ENCODE measurements at regions of chr6 and their contacts with region 1.

Region 1: GRCh38 chr6:47455534-47456209 is 21.9 kb upstream of the CD2AP start:
- DNase-seq: no peak
- H3K4me3 ChIP-seq: no peak overlapping the region
- H3K4me3 Mint-ChIP-seq: no peak overlapping the region
- H3K27ac Mint-ChIP-seq: no peak overlapping the region
- H3K4me1 ChIP-seq: peaks cover 19% of the 10 kb centered on the region
- H3K4me1 Mint-ChIP-seq: peaks cover 13% of the 10 kb centered on the region
- H3K27me3 ChIP-seq: no peaks in the 10 kb centered on the region
- H3K27me3 Mint-ChIP-seq: no peaks in the 10 kb centered on the region
- CTCF ChIP-seq: no peak

Region 2: DNA sequence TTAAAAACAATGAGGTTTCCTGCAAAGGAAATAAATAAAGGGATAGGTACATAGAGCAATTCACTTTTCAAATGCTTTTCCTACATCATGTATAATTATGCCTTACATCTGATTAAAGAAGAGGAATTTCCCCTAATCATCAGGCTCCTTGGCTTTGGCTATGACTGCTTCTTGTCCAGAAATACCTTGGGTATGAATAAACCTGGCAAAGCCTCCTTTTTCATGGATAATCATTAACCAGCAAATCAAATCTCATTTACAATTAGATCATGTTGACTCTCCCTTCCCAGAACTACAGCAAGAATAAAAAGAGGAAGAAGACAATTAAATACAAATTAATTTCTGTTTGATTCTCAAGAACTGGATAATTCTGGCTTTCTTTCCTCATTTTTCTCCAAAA is 36.1 kb before region 1 on chr6:
- CTCF ChIA-PET with region 1: no interaction called
- POLR2A ChIA-PET with region 1: no interaction called
- intact Hi-C with region 1: loop called (anchors 1 kb)
- DNase-seq: no peak
- H3K4me3 ChIP-seq: no peak overlapping the region
- H3K4me3 Mint-ChIP-seq: no peak overlapping the region
- H3K27ac Mint-ChIP-seq: no peak overlapping the region
- H3K4me1 ChIP-seq: peaks cover 44% of the 10 kb centered on the region
- H3K4me1 Mint-ChIP-seq: peaks cover 28% of the 10 kb centered on the region
- H3K27me3 ChIP-seq: no peaks in the 10 kb centered on the region
- H3K27me3 Mint-ChIP-seq: no peaks in the 10 kb centered on the region
- CTCF ChIP-seq: no peak

Region 3: DNA sequence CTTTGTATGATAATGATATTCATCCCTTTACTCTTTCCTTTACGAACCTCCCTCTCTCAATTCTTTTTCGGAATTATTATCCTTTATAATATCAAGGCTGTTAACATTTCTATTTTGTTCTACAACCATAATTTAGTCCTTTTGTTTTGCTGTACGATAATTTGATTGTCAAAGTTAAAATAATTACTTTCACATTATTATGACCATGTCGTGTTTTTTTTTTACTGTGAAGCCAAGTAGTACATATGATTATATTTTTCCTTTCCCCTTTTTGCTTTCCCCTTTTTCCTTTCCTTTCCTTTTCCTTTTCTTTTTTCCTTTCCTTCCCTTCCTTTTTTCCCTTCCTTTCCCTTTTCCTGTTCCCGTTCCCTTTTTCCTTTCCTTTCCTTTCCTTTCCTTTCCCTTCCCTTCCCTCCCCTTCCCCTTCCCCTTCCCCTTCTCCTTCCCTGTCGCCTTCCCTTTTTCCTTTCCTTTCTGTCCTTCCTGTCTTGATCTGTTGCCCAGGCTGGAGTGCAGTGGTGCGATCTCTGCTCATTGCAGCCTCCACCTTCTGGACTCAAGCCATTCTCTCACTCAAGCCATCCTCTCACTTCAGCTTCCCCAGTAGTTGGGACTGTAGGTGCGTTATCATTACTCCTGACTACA is 41.4 kb after region 1 on chr6:
- CTCF ChIA-PET with region 1: no interaction called
- POLR2A ChIA-PET with region 1: no interaction called
- intact Hi-C with region 1: no loop called
- DNase-seq: no peak
- H3K4me3 ChIP-seq: no peak overlapping the region
- H3K4me3 Mint-ChIP-seq: no peak overlapping the region
- H3K27ac Mint-ChIP-seq: no peak overlapping the region
- H3K4me1 ChIP-seq: peaks cover 13% of the 10 kb centered on the region
- H3K4me1 Mint-ChIP-seq: peaks cover 61% of the 10 kb centered on the region
- H3K27me3 ChIP-seq: no peaks in the 10 kb centered on the region
- H3K27me3 Mint-ChIP-seq: no peaks in the 10 kb centered on the region
- CTCF ChIP-seq: no peak

Measured in Caco-2 (cell line).